Ovary (tissue), 10 donors: ENCODE measurements at regions of chr15 and their contacts with region 1.

Region 1: DNA sequence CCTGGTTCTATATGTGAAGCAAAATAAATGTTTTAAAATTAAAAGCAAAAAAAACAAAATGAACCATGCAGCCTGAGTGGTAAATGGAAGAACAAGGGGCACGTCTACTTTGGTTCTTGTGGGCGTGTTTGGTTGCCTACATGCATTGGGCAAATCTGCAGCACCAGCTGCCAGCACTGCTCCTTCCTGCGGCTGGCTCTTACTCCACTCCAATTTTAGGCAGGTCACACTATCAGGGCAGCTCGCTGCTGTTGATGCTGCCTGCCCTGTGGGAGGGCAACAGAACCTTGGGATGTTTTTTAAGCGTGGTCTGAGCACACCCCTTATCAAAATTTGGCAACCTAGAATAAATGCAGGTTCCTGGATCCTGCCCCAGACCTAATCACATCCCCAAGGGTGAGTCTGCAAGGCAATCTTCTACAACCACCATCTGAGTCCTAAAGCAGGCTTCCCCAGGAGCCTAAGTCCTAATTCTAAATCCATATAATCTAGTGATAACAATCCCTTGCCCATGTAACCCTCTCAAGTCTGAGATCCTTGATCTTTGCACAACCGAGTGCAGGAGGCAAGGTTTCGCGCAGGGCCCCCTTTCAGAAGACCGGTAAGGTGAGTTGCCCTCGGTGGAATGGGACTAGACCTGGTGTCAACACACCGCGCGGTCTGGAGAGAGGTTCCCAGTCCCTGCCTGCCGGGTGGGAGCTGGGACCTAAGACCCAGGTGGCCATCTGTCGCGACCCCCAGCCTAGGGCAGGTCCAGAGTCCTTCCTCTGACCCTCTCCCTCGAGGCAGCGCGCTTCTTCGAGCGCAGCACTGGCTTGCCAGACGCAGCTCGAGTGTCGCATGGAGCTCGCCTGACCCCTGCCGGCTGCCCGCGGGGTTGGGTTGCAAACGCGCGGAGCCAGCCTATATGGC is 15.9 kb downstream of the IVD start:
- DNase-seq: peak; percentile 73 to 87 (median 83)
- H3K4me3 ChIP-seq: no peak overlapping the region
- H3K27ac ChIP-seq: peak overlapping the region in 1 of 2 donors; percentile 58
- H3K4me1 ChIP-seq: peaks cover 14% of the 10 kb centered on the region
- H3K27me3 ChIP-seq: no peaks in the 10 kb centered on the region
- CTCF ChIP-seq: peak; percentile 86 to 94 (median 90)
- EP300 ChIP-seq: no peak
- POLR2A ChIP-seq: no peak

Region 2: DNA sequence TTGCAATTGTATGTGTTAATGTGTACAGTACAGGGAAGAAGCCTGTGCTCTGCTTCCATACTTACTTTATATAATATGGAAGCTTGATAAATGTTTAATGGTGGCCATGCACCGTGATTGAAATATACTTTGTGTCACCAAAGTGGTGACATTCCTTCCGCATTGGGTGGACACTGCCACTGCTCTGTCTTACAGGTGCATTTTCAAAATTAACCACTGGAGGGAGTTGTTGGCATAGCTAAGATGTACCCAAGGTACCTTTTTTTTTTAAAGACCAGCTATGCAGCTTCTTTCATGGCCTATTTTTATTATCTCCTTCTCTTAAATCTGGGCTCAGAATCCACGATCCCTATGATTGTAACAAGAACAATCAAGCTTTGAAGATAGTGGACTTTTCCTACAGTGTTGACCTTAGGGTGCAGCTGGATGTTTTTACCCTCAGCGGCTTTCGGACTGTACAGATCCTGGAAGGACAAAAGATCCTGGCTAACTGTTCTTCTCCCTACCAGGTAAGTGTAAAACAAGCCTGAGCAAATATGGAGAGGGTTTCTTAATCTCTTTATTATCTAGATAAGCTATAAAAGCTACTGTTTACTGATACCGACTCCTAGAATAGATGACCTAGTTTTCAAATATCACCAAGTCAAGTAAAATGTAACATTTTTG is 204.2 kb before region 1 on chr15:
- intact Hi-C with region 1: loop called in 2 of 4 experiments (anchors 5 to 10 kb)
- DNase-seq: peak in 1 of 5 donors; percentile 35
- H3K4me3 ChIP-seq: no peak overlapping the region
- H3K27ac ChIP-seq: no peak overlapping the region
- H3K4me1 ChIP-seq: no peaks in the 10 kb centered on the region
- H3K27me3 ChIP-seq: no peaks in the 10 kb centered on the region
- CTCF ChIP-seq: peak; percentile 60 to 80 (median 67)
- EP300 ChIP-seq: no peak
- POLR2A ChIP-seq: no peak

Region 3: GRCh38 chr15:40323239-40323952 is 98.1 kb before region 1 on chr15 and contains the start of gene INAFM2:
- intact Hi-C with region 1: loop called in 1 of 4 experiments (anchors 2 kb)
- DNase-seq: peak; percentile 85 to 95 (median 91)
- H3K4me3 ChIP-seq: peak within 1 kb of the TSS; percentile 80
- H3K27ac ChIP-seq: peak within 1 kb of the TSS; percentile 37 to 72
- H3K4me1 ChIP-seq: peaks cover 7% of the 10 kb centered on the region
- H3K27me3 ChIP-seq: no peaks in the 10 kb centered on the region
- CTCF ChIP-seq: peak; percentile 70 to 86 (median 70)
- EP300 ChIP-seq: no peak
- POLR2A ChIP-seq: no peak
- total RNA-seq, gene INAFM2: 8.1 to 50.6 (median 30.6) TPM

Region 4: GRCh38 chr15:40367686-40368611 is 53.6 kb before region 1 on chr15:
- intact Hi-C with region 1: loop called in 2 of 4 experiments (anchors 5 to 10 kb)
- DNase-seq: peak; percentile 76 to 88 (median 80)
- H3K4me3 ChIP-seq: peak overlapping the region; percentile 22
- H3K27ac ChIP-seq: no peak overlapping the region
- H3K4me1 ChIP-seq: peaks cover 3% of the 10 kb centered on the region
- H3K27me3 ChIP-seq: no peaks in the 10 kb centered on the region
- CTCF ChIP-seq: peak; percentile 71 to 92 (median 89)
- EP300 ChIP-seq: no peak
- POLR2A ChIP-seq: no peak